K562 (cell line): ENCODE measurements at regions of chr19 and their contacts with region 1.

Region 1: GRCh38 chr19:21622920-21623319 is 117.5 kb downstream of the ZNF429 start:
- DNase-seq: no peak
- ATAC-seq: no peak
- H3K4me3 ChIP-seq: no peak overlapping the region
- H3K27ac ChIP-seq: no peak overlapping the region
- H3K4me1 ChIP-seq: peaks cover 0 to 39% of the 10 kb centered on the region in 2 experiments; a peak in 4 of 5 replicates
- H3K27me3 ChIP-seq: no peaks in the 10 kb centered on the region
- CTCF ChIP-seq: no peak
- EP300 ChIP-seq: no peak
- POLR2A ChIP-seq: no peak
- RAD21 ChIP-seq: no peak

Region 2: GRCh38 chr19:21505459-21506451 is 117.2 kb before region 1 on chr19 and contains the start of gene ZNF429:
- CTCF ChIA-PET with region 1: no interaction called
- POLR2A ChIA-PET with region 1: no interaction called
- in situ Hi-C with region 1: no loop called
- intact Hi-C with region 1: loop called (anchors 5 kb)
- DNase-seq: peak; percentile 83 to 96 (median 89)
- ATAC-seq: peak; percentile 99
- H3K4me3 ChIP-seq: peak within 1 kb of the TSS; percentile 76
- H3K27ac ChIP-seq: peak within 1 kb of the TSS; percentile 96
- H3K4me1 ChIP-seq: peaks cover 9 to 17% of the 10 kb centered on the region in 2 experiments; a peak in 3 of 5 replicates
- H3K27me3 ChIP-seq: no peaks in the 10 kb centered on the region
- CTCF ChIP-seq: 0 out of 6 replicates have a peak, but pooled peaks of 2 of the 3 experiments have one; percentile 8 to 17
- EP300 ChIP-seq: no peak
- POLR2A ChIP-seq: peak; percentile 93
- RAD21 ChIP-seq: peak in 1 of 2 experiments; percentile 38; a peak in 1 of 4 replicates
- polyA plus RNA-seq, gene ZNF429: 16.5 to 24.5 TPM

Region 3: DNA sequence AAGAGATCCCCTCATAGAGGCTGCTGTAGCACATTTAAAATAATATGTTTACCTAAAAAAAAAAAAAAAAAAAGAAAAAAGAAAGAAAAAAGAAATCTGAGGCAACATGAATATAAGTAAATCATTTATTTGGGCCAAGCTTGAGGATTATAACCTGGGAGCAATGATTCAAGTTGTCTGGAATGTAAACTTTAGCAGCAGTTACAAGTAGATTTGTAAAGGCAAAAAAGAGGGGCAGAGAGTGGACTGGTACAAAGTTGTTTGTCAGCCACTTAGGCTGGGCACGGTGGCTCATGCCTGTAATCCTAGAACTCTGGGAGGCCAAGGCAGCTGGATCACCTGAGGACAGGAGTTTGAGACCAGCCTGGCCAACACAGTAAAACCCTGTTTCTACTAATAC is 201.8 kb after region 1 on chr19:
- CTCF ChIA-PET with region 1: no interaction called
- POLR2A ChIA-PET with region 1: no interaction called
- in situ Hi-C with region 1: no loop called
- intact Hi-C with region 1: no loop called
- DNase-seq: no peak
- ATAC-seq: no peak
- H3K4me3 ChIP-seq: no peak overlapping the region
- H3K27ac ChIP-seq: no peak overlapping the region
- H3K4me1 ChIP-seq: no peaks in the 10 kb centered on the region; a peak in 1 of 5 replicates
- H3K27me3 ChIP-seq: no peaks in the 10 kb centered on the region
- CTCF ChIP-seq: no peak
- EP300 ChIP-seq: no peak
- POLR2A ChIP-seq: no peak
- RAD21 ChIP-seq: no peak